ENCODE measurements at regions of chr5 and their contacts with region 1.

Region 1: DNA sequence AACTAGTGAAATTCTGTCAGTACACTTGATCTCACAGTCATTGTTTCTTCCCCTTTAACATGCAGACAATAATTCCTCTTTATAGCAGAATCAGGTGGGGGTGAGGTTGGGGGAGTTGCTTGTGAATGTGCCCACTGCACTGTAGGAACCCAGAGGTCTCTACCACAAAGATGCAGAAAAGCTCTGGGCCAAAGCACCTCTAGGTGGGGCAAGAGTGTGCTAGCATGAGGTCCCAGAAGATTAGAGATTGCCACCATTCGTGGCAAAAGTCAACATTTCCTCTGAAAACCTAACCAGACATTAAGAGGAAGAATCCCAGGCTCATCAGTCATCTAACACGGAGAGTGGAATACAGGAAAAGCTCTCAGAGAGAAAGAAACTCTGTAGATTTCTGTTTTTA is 74.5 kb downstream of the PTCD2 start:
- DNase-seq: no peak
- ATAC-seq: no peak
- H3K4me3 ChIP-seq: no peak overlapping the region
- H3K27ac ChIP-seq: no peak overlapping the region
- H3K4me1 ChIP-seq: peaks cover 28% of the 10 kb centered on the region
- H3K27me3 ChIP-seq: no peaks in the 10 kb centered on the region
- CTCF ChIP-seq: peak; percentile 25

Region 2: GRCh38 chr5:71938895-71939294 is 455.8 kb before region 1 on chr5:
- intact Hi-C with region 1: no loop called
- DNase-seq: no peak
- ATAC-seq: no peak
- H3K4me3 ChIP-seq: no peak overlapping the region
- H3K27ac ChIP-seq: no peak overlapping the region
- H3K4me1 ChIP-seq: no peaks in the 10 kb centered on the region
- H3K27me3 ChIP-seq: no peaks in the 10 kb centered on the region
- CTCF ChIP-seq: no peak

Region 3: DNA sequence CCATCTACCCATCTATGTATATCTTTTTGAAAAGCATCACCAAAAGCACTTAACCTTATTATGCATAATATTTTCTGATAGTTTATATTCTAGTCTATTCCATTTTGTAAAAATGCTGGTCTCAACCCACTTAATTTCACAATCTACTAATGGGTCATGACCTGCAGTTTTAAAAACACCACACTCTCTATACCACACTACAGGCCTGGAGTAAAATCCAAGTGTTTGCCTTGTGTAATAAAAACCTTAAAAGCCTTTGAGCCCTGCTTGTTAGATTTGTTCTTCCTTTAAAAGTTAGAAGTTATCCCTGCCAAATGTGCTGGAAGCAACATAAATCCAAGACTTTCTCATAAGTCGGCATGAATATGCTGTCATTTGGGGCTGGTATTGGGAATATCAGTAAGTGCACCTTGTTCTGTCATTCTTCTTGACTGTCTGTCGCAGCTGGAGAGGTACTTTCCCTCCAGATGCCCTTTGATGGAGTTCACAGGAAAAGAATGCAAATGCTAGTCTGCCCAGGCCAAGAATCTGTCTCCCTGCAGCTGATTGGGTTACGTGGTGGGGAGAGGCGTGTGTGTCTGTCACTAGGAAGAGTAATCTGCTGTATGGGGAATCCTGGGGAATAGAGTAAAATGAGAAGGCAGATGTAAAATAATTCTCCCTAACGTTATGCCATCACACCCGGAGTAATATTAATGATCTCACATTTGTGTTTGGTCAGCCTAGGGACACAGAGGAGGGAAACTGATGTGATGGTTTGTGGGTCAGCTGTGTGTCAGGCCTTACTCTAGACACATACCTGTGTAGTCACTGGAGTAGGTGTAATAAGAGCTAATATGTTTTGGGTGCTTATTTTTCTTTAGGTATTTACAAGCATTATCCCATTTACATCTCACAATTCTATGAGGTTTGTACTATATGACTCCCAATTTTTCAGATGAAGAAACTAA is 33.1 kb after region 1 on chr5:
- intact Hi-C with region 1: loop called (anchors 5 kb)
- DNase-seq: no peak
- ATAC-seq: peak; percentile 96 to 98 (median 98)
- H3K4me3 ChIP-seq: no peak overlapping the region
- H3K27ac ChIP-seq: peak overlapping the region; percentile 76
- H3K4me1 ChIP-seq: peaks cover 25% of the 10 kb centered on the region
- H3K27me3 ChIP-seq: no peaks in the 10 kb centered on the region
- CTCF ChIP-seq: no peak

Measured in psoas muscle (tissue), 8 donors.